ENCODE measurements at regions of chr1 and their contacts with region 1.

Region 1: DNA sequence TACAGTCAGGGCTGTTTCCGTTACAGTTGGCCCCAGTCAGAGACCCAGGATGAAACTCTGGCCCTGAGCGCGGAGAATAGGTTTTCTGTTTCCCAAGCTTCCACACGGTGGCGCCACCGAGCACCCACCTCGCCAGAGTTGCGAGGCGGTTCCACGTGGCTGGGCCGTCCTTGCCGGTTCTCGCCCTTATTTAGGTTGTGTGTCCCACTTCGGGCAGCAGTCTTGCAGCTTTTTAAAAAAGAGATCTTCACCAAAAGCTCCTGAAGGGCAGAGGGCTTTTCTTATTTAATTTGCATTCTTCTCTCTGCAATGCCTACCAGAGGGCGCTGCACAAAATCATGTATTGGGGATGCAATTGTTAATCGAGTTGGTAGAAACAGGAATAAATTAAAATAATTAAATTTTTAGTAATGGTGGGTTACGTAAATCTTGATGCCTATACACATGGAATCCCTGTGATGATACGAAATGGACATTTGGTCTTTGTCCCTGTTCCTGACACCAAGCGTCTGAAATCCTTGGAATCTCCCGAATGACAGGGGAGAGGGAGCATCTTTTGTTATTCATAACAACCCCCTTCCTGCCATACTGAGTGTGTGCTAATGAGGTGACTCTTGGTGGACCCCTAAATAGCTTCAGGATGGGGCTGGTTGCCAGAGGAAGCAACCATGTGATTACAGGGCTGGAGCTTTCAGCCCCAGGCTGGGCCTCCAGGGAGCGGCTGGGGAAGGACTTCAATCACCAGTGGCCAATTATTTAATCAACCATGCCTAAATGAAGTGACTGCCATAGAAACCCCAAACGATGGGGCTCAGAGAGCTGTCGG is 5.6 kb upstream of the S100A7 start:
- H3K4me3 ChIP-seq: no peak overlapping the region
- H3K27ac ChIP-seq: no peak overlapping the region
- H3K4me1 ChIP-seq: no peaks in the 10 kb centered on the region
- CTCF ChIP-seq: peak; percentile 67

Region 2: DNA sequence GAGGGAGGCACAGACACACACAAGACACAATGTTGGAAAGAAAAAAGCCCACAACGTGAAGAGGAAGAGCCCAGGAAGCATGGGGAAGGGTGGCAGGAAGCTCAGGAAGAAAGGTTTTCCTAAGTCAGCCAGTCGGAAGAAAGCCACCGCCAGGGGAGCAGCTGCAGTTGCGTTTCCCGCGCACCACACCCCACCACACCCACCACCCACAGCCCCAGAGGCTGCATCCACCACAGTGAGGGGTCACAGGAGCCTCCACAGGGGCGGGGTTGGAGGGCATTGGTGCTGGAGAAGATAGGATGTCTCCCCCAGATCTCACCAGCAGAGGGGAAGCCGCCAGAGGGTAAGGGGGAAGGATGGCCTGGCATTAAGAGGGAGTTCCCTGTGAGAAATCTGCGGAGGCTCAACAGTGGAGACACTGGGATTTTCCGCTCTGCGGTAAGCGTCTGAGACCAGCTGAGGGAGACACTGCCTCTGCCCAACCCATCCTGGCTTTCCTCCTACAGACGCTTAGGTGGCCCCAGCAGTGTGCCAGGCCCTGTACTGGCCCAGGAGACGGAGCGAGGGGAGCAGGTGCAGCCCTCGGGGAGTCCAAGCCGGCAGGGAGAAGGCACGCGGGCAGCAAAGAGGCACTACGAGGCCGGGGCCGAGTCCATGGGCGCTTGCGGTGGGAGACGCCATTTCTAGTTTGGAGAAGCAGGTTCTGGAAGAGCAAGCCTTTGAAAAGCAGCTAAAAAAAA is 173.1 kb before region 1 on chr1:
- CTCF ChIA-PET with region 1: no interaction called
- POLR2A ChIA-PET with region 1: no interaction called
- H3K4me3 ChIP-seq: no peak overlapping the region
- H3K27ac ChIP-seq: no peak overlapping the region
- H3K4me1 ChIP-seq: no peaks in the 10 kb centered on the region
- CTCF ChIP-seq: no peak

Region 3: DNA sequence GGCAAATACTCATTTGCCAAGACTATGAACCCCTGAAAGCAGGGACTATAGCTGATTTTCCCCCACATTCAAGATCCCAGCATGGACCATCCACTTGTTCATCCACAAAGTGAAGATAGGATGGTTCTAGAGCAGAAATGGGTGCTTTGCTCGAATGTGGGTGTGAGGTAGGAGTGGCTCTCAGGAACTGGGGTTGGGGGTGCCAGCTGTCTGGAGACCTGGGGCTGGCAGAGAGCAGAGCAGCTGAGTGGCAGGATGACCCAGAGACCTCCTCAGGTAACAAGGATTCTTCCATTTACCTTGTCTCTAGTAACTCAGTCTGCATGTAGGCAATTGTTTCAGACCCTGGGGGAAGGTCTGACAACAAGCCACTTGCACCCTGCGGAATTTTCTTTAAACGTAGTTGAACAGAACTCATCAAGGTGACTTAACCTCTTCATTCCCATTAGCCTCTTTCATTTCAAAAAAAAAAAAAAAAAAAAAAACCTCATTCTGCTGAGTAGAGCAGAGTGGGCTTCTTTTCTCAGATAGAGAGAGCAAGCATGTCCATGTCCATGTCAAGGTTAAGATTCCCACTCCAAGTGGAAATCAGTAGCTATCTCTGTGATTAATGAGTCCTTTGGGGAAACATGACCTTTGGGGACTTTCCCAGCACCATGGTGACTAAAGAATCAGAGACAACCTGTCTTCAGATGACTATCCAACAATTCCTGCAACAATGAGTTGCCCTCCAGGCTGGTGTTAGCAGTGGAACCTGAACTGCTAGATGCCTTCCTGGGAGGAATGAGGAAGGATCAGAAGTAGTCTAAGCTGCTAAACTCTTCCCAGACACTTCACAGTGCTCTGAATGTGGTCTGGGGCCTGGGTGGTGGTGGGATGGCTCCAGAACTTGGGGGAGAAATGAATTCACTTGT is 102.1 kb before region 1 on chr1:
- CTCF ChIA-PET with region 1: no interaction called
- POLR2A ChIA-PET with region 1: no interaction called
- H3K4me3 ChIP-seq: no peak overlapping the region
- H3K27ac ChIP-seq: no peak overlapping the region
- H3K4me1 ChIP-seq: no peaks in the 10 kb centered on the region
- CTCF ChIP-seq: no peak

Region 4: DNA sequence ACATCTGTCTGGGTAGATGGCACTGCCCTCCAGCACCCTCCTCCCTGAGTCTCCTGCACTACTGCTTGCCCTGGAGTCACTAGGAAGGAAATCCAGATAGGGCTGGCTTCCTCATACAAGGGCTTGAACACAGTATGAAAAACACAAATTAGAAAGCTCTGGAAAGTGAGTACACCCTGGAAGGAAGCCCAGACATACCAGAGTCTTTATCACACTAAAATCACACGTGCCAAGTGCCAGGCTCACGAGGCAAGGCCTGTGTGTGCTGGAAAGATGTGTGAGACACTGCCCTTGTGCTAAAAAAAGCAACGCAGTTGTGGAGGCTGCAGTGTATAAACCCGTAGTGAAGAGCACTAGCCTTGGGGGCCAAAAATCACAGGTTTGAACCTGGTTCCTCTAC is 22.7 kb after region 1 on chr1:
- CTCF ChIA-PET with region 1: interaction called, 63 read pairs
- POLR2A ChIA-PET with region 1: no interaction called
- H3K4me3 ChIP-seq: no peak overlapping the region
- H3K27ac ChIP-seq: no peak overlapping the region
- H3K4me1 ChIP-seq: no peaks in the 10 kb centered on the region; the same call in 1 of the 2 replicates
- CTCF ChIP-seq: no peak

Region 5: DNA sequence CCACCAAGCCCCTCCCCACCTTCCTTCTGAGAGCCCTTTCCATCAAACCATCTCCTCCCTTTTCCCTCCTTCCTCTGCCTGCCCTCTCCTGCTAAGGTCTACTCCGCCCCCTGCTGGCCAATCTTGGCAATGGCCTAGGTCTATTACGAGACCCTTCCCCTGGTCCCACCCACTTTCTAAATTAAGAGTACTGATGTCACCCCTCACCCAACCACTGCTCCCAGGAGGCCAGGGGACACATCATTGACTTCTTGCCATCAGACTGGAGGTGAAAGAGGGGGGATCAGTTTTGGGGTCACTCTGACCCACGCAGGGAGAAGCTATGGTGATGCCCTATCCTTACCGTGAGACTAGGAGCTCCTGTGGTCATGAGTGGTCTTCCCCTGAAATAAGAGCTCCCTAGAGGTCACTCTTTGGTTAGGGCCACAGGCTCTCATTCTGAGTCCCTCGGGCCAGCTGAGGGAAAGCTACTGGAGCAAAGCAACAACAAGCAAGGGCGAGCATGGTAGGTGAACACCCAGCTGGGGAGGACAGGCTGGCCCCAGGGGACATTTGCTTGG is 29.0 kb after region 1 on chr1:
- CTCF ChIA-PET with region 1: interaction called, 63 read pairs
- POLR2A ChIA-PET with region 1: no interaction called
- H3K4me3 ChIP-seq: no peak overlapping the region
- H3K27ac ChIP-seq: no peak overlapping the region
- H3K4me1 ChIP-seq: no peaks in the 10 kb centered on the region; the same call in 1 of the 2 replicates
- CTCF ChIP-seq: peak; percentile 92

Region 6: GRCh38 chr1:153515504-153516394 is 49.7 kb after region 1 on chr1:
- CTCF ChIA-PET with region 1: no interaction called
- POLR2A ChIA-PET with region 1: no interaction called
- H3K4me3 ChIP-seq: no peak overlapping the region
- H3K27ac ChIP-seq: no peak overlapping the region
- H3K4me1 ChIP-seq: no peaks in the 10 kb centered on the region
- CTCF ChIP-seq: no peak

Measured in HEK293 (cell line).